Right ventricle myocardium inferior (tissue), 1 donor: ENCODE measurements at regions of chr2 and their contacts with region 1.

Region 1: GRCh38 chr2:71510196-71510807 is 56.9 kb downstream of the DYSF start:
- DNase-seq: peak; percentile 82
- ATAC-seq: peak; percentile 63

Region 2: GRCh38 chr2:71157124-71157793 is 353.0 kb before region 1 on chr2:
- intact Hi-C with region 1: loop called (anchors 2 kb)
- DNase-seq: no peak
- ATAC-seq: peak; percentile 67

Region 3: DNA sequence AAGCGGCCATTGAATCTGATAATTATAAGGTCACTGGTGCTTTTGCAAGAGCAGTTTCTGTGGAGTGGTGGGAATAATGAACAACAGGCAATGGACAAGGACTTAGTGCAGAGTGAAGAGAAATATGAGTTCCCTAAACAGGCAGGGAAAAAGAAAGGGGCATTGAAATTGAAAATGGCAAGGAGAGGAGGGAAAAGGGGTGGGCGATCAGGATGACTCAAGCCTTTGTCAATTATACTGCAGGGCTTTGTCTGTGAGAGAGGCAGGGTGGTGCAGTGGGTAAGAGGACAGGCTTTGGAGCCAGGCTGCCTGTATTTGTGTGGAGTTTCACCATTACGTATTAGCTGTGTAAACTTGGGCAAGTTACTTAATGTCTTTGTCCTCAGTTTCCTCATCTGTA is 253.9 kb before region 1 on chr2:
- intact Hi-C with region 1: no loop called
- DNase-seq: no peak
- ATAC-seq: no peak

Region 4: DNA sequence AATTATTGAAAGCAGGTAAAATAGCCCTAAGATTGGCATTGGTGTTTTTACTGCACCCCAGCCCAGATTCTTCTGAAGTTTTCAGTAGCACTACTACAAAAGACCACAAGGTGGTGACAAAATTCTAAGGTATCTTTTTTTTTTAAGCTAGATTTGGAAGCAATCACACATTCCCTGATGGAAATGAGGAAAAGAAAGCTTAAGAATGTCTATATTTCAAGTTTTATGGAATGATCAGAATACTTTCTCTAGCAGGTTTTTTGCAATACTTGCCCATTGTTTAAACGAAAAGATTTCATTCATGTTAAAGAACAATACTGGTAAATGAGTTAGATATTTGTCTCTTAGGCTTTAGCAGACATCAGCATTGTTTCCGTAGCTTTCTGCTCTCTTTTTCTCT is 210.8 kb before region 1 on chr2:
- intact Hi-C with region 1: loop called (anchors 1 kb)
- DNase-seq: no peak
- ATAC-seq: no peak

Region 5: GRCh38 chr2:71460595-71461303 is 49.6 kb before region 1 on chr2:
- intact Hi-C with region 1: loop called (anchors 1 kb)
- DNase-seq: peak; percentile 76
- ATAC-seq: no peak

Region 6: GRCh38 chr2:71528131-71528591 is 17.9 kb after region 1 on chr2:
- intact Hi-C with region 1: no loop called
- DNase-seq: no peak
- ATAC-seq: no peak